ENCODE measurements at regions of chr3 and their contacts with region 1.

Region 1: GRCh38 chr3:141342386-141342785 is 25.9 kb upstream of the ZBTB38 start:
- DNase-seq: no peak
- ATAC-seq: no peak
- H3K4me3 ChIP-seq: no peak overlapping the region
- H3K4me3 Mint-ChIP-seq: no peak overlapping the region
- H3K27ac ChIP-seq: no peak overlapping the region
- H3K27ac Mint-ChIP-seq: no peak overlapping the region
- H3K4me1 ChIP-seq: no peaks in the 10 kb centered on the region
- H3K4me1 Mint-ChIP-seq: no peaks in the 10 kb centered on the region
- H3K27me3 ChIP-seq: peaks cover 0 to 3% of the 10 kb centered on the region in 2 experiments
- H3K27me3 Mint-ChIP-seq: peaks cover 5 to 6% of the 10 kb centered on the region in 2 donors

Region 2: DNA sequence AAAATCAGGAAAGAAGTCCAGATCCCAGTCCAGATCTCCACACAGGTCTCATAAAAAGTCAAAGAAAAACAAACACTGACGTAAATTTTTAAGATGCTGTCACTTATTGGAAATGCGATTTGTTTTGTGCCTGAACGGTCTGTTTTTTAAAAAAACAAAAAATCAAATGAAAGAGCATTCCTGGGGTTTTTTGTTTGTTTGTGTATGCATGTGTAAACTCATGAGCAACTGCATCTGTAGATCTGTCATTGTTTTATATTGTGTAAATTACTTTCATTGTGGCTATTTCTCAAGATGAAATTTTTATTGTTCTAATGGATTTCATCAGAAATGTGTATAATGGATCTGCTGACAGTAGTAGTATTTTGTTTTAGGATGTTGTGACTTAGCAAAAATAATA is 1714.0 kb after region 1 on chr3:
- CTCF ChIA-PET with region 1: interaction called in 1 of 2 experiments, 5 read pairs
- POLR2A ChIA-PET with region 1: interaction called in 1 of 2 experiments, 13 read pairs
- DNase-seq: no peak
- ATAC-seq: no peak
- H3K4me3 ChIP-seq: no peak overlapping the region
- H3K4me3 Mint-ChIP-seq: no peak overlapping the region
- H3K27ac ChIP-seq: no peak overlapping the region
- H3K27ac Mint-ChIP-seq: no peak overlapping the region
- H3K4me1 ChIP-seq: no peaks in the 10 kb centered on the region
- H3K4me1 Mint-ChIP-seq: peaks cover 4 to 14% (median 13%) of the 10 kb centered on the region in 3 donors
- H3K27me3 ChIP-seq: no peaks in the 10 kb centered on the region
- H3K27me3 Mint-ChIP-seq: no peaks in the 10 kb centered on the region

Measured in T-cell (primary cell).